ENCODE measurements at regions of chr16 and their contacts with region 1.

Region 1: GRCh38 chr16:66894948-66895688 is 14.8 kb downstream of the PDP2 start:
- DNase-seq: peak; percentile 45
- ATAC-seq: peak; percentile 93
- H3K4me3 ChIP-seq: no peak overlapping the region
- H3K27ac ChIP-seq: no peak overlapping the region
- H3K4me1 ChIP-seq: peaks cover 4 to 11% of the 10 kb centered on the region in 2 experiments; a peak in 3 of 4 replicates
- H3K27me3 ChIP-seq: no peaks in the 10 kb centered on the region
- CTCF ChIP-seq: peak; percentile 80 to 92 (median 89)
- POLR2A ChIP-seq: no peak
- RAD21 ChIP-seq: peak; percentile 97

Region 2: GRCh38 chr16:66483689-66484481 is 411.2 kb before region 1 on chr16:
- CTCF ChIA-PET with region 1: no interaction called
- POLR2A ChIA-PET with region 1: no interaction called
- RAD21 ChIA-PET with region 1: no interaction called
- intact Hi-C with region 1: no loop called
- DNase-seq: peak; percentile 59
- ATAC-seq: peak; percentile 91
- H3K4me3 ChIP-seq: no peak overlapping the region
- H3K27ac ChIP-seq: no peak overlapping the region
- H3K4me1 ChIP-seq: peaks cover under 1 to 15% of the 10 kb centered on the region in 2 experiments; a peak in 3 of 4 replicates
- H3K27me3 ChIP-seq: no peaks in the 10 kb centered on the region
- CTCF ChIP-seq: peak; percentile 96 to 98 (median 97)
- POLR2A ChIP-seq: no peak
- RAD21 ChIP-seq: peak; percentile 98

Region 3: DNA sequence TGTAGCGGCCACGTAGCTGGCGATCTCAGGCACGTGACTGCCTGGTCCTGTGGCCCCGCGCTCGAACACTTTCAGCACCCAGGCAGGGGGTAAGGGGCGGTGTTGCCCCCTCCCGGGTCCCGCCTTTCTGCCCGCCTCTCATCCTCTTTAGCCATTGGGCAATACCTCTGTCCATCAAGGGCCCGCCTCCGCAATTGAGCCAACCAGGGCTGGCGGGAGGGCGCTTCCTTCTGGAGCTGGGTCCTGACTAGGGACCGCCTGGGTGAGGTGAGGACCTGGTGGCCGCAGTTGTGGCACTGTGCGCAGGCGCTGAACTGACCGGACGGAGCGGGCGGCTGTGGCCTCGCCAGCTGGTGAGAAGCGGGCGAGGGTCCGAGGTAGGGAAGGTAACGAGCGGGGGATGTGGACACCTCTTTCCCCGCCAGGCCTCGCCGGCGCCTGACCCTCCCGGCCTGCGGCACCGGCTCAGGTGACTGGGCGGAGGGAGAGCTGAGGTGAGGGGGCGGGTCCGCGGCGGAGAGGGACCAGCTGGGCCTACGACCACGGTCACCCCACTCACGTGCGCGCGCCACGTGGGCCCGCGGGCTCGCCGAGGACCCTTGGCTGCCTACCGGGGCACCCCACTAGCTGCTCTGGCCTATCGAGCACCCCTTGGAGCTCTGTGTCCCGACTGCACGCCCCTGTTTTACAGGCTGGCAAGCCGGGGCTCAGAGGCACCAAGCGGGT is 14.7 kb before region 1 on chr16 and contains the start of gene PDP2:
- CTCF ChIA-PET with region 1: interaction called, 10 read pairs
- POLR2A ChIA-PET with region 1: no interaction called
- RAD21 ChIA-PET with region 1: no interaction called
- intact Hi-C with region 1: no loop called
- DNase-seq: peak; percentile 92
- ATAC-seq: peak; percentile 99
- H3K4me3 ChIP-seq: peak within 1 kb of the TSS; percentile 87 to 95
- H3K27ac ChIP-seq: peak within 1 kb of the TSS; percentile 82
- H3K4me1 ChIP-seq: peaks cover 10 to 15% of the 10 kb centered on the region in 2 experiments
- H3K27me3 ChIP-seq: no peaks in the 10 kb centered on the region
- CTCF ChIP-seq: no peak
- POLR2A ChIP-seq: peak; percentile 50
- RAD21 ChIP-seq: no peak
- total RNA-seq, gene PDP2: 19.9 TPM

Region 4: GRCh38 chr16:66911112-66911511 is 16.0 kb after region 1 on chr16:
- CTCF ChIA-PET with region 1: interaction called, 10 read pairs
- POLR2A ChIA-PET with region 1: no interaction called
- RAD21 ChIA-PET with region 1: no interaction called
- intact Hi-C with region 1: no loop called
- DNase-seq: no peak
- ATAC-seq: 0 out of 2 replicates have a peak, but pooled peaks have one; percentile 13
- H3K4me3 ChIP-seq: no peak overlapping the region
- H3K27ac ChIP-seq: no peak overlapping the region
- H3K4me1 ChIP-seq: peaks cover 0 to 13% of the 10 kb centered on the region in 2 experiments; a peak in 3 of 4 replicates
- H3K27me3 ChIP-seq: no peaks in the 10 kb centered on the region
- CTCF ChIP-seq: no peak
- POLR2A ChIP-seq: no peak
- RAD21 ChIP-seq: no peak

Region 5: DNA sequence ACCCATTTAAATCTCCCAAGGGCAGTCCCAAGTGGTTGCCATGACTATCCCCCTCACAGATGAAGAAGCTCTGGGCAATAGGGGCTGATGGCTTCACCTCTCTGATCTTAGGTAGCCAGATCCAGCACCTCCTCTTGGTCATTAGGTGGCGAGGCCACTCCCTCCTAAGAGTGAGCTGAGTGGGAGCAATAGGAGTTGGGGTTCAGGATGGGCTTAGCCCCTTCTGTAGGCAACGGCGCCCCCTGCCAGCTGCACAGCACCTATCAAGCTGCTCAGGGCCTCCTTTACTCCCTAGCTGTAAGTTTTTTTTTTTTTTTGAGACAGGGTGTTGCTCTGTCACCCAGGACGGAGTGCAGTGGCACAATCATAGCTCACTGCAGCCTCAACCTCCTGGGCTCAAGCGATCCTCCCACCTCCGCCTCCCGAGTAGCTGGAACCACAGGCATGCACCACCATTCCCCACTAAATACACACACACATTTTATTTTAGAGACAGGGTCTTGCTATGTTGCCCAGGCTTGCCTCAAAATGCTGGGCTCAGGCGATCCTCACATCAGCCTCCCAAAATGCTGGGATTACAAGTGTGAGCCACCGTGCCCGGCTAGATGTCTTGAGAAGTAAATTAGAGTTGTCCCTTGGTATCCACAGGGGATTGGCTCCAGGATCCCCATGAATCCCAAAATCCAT is 33.7 kb after region 1 on chr16:
- CTCF ChIA-PET with region 1: interaction called, 32 read pairs
- POLR2A ChIA-PET with region 1: no interaction called
- RAD21 ChIA-PET with region 1: interaction called, 5 to 6 read pairs
- intact Hi-C with region 1: loop called (anchors 1 kb)
- DNase-seq: no peak
- ATAC-seq: peak; percentile 39
- H3K4me3 ChIP-seq: no peak overlapping the region
- H3K27ac ChIP-seq: 0 out of 2 replicates have a peak overlapping the region, but pooled peaks have one; percentile 22
- H3K4me1 ChIP-seq: peaks cover 21 to 63% of the 10 kb centered on the region in 2 experiments
- H3K27me3 ChIP-seq: no peaks in the 10 kb centered on the region
- CTCF ChIP-seq: peak in 2 of 3 experiments; percentile 57 to 61; a peak in 5 of 6 replicates
- POLR2A ChIP-seq: no peak
- RAD21 ChIP-seq: no peak; the same call in 1 of the 2 replicates

Region 6: DNA sequence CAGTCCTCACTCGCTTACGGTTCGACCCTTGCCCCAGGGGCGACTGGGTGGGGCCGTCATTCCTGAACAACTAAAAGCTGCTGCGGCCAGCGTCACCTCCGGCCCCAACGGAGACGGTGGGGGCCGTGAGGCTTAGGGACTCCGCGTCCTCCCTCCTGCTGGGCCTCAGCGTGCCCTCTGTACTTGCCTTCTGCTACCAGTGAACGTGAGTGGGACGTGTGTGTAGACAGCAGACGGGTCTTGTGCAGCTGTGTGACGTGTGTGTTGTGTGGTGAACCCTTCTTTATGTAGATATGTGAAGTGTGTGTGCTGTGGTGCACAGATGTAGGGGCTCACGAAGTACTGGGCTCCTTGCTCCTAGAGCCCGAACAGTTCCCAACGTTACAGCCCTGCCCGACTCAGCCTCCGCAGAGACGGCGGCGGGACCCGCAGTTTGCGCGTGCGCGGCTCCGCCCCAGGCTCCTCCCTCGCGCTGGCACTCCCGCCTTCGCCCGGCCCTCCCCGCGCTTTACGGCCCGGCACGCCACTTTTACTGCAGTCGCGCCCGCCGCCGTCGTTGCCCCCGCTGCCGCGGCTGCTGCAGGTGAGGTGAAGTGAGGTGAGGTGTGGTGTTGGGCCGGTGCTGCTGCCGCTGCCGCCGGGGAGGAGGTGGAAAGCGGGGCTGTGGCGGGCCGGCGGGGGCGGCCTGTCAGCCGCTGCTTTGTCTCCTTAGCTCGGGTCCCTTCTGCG is 214.5 kb after region 1 on chr16 and contains the start of gene PHAF1:
- CTCF ChIA-PET with region 1: no interaction called
- POLR2A ChIA-PET with region 1: no interaction called
- RAD21 ChIA-PET with region 1: no interaction called
- intact Hi-C with region 1: loop called (anchors 10 kb)
- DNase-seq: peak; percentile 71
- ATAC-seq: peak; percentile 93
- H3K4me3 ChIP-seq: peak within 1 kb of the TSS; percentile 68 to 81
- H3K27ac ChIP-seq: peak within 1 kb of the TSS; percentile 53
- H3K4me1 ChIP-seq: peaks cover 14 to 44% of the 10 kb centered on the region in 2 experiments; a peak in 3 of 4 replicates
- H3K27me3 ChIP-seq: no peaks in the 10 kb centered on the region
- CTCF ChIP-seq: no peak
- POLR2A ChIP-seq: peak; percentile 97
- RAD21 ChIP-seq: no peak
- total RNA-seq, gene PHAF1: 19.2 TPM

Region 7: DNA sequence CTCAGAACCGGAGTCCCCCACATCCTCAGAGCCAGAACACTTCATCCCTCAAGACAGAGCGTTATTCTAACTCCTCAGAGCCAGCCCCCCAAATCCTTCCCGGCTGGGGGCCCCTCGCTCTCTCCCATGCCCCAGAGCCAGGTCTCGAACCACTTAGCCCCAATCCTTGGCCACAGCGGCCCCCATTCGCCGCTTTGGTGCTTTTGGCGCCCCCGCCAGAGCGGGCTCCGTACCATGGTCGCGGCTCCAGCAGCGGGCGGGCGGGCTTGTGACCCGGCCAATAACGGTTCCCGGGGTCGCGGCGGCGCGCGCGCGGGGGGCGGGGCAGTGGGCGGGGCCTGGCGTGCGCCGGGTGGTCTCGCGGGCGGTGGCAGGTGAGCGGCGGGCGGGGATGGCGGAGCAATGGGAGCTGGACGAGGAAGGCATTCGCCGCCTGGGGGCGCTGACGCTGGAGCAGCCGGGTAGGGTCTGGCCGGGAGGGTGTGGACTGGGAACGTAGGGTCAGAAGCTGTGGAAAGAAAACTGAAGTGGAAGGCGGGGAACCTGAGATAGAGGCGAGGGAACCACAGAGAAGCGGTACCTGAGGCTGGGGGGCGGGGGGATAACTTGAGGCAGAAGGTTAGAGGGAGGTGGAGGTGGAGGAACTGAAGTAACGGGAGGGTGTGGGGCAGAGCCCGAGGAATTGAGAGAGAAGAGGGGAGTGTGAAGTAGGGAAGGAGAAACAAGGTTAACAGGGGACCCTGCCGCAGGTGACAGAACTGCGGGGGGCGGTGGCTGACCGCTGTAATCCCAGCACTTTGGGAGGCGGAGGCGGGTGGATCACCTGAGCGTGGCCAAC is 431.6 kb after region 1 on chr16 and contains the starts of genes KCTD19 and LRRC36:
- CTCF ChIA-PET with region 1: no interaction called
- POLR2A ChIA-PET with region 1: no interaction called
- RAD21 ChIA-PET with region 1: no interaction called
- intact Hi-C with region 1: no loop called
- DNase-seq: no peak
- ATAC-seq: no peak
- H3K4me3 ChIP-seq: no peak within 1 kb of the TSS
- H3K27ac ChIP-seq: no peak within 1 kb of the TSS
- H3K4me1 ChIP-seq: no peaks in the 10 kb centered on the region
- H3K27me3 ChIP-seq: peaks cover 9% of the 10 kb centered on the region; the same call in 1 of the 2 replicates
- CTCF ChIP-seq: no peak
- POLR2A ChIP-seq: no peak
- RAD21 ChIP-seq: no peak
- total RNA-seq, gene KCTD19: not detected
- total RNA-seq, gene LRRC36: not detected

Measured in HCT116 (cell line).